Lower leg skin (tissue), 4 donors: ENCODE measurements at regions of chr9 and their contacts with region 1.

Region 1: GRCh38 chr9:1009101-1009707 is 32.7 kb downstream of the DMRT3 start:
- DNase-seq: peak; percentile 68 to 97
- H3K4me3 ChIP-seq: no peak overlapping the region
- CTCF ChIP-seq: peak in 1 of 3 donors; percentile 17
- POLR2A ChIP-seq: no peak

Region 2: DNA sequence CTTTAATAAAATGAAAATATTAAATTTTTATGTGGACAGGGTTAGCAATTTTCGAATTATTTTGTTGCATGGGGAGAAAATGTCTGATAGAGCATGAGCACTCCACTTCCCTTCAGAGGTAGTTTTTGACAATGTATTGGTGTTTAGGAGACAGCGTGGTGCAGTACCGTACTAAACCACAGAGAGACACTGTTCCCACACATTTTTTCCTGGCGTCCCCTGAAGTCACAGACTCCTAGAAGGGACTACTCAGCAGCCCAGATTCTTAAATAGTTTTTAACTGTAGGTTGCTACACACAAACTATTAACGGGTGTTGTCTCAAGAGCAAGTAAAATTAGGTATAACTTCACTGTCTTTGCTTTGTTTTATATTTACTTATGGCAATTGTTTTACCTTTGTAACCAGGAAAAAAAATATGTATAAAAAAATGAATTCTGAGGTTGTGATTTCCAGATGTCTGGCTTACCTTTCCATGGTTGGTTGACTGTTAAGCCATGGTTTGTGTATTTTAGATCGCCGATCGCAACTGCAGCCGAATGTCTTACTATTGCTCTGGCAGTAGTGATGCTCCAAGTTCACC is 623.3 kb before region 1 on chr9:
- intact Hi-C with region 1: loop called (anchors 10 kb)
- DNase-seq: peak in 1 of 2 donors; percentile 33
- H3K4me3 ChIP-seq: no peak overlapping the region
- CTCF ChIP-seq: peak in 1 of 3 donors; percentile 53
- POLR2A ChIP-seq: no peak

Region 3: GRCh38 chr9:755454-756381 is 253.5 kb before region 1 on chr9:
- intact Hi-C with region 1: no loop called
- DNase-seq: peak in 1 of 2 donors; percentile 74
- H3K4me3 ChIP-seq: no peak overlapping the region
- CTCF ChIP-seq: no peak
- POLR2A ChIP-seq: no peak

Region 4: GRCh38 chr9:893843-894420 is 115.3 kb before region 1 on chr9:
- intact Hi-C with region 1: loop called (anchors 5 kb)
- DNase-seq: peak in 1 of 2 donors; percentile 43
- H3K4me3 ChIP-seq: no peak overlapping the region
- CTCF ChIP-seq: peak in 1 of 3 donors; percentile 43
- POLR2A ChIP-seq: no peak

Region 5: DNA sequence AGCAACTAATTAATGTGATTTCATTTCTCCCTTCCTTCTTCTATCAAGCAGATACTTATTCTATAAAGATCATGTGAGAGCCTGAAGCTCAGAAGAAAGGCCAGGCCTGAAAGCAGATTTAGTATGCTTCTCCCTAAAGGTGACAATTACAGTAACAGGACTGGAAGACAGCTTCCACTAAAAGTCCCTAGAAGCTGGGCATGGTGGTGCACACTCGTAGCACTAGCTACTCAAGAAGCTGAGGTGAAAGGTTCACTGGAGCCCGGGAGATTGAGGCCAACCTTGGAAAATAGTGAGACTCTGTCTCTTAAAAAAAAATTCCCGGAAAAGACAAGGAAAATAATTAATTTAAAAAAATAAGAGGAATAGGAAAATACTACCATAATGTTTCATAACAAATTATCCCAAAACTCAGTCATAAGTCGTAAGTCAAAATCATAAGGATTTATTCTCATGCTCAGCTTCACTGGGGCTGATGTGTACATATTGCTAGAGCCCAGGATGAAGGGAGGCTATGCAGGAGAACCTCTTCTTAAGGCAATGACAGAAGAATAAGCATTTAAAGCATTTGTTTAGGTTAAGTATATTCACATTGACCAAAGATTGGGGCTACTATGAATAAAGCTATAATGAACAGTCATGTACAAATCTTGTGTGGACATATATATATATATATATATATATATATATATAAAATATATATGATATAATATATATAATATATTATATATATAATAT is 795.1 kb after region 1 on chr9:
- intact Hi-C with region 1: no loop called
- DNase-seq: no peak
- H3K4me3 ChIP-seq: no peak overlapping the region
- CTCF ChIP-seq: no peak
- POLR2A ChIP-seq: no peak